B cell (primary cell): ENCODE measurements at regions of chr5 and their contacts with region 1.

Region 1: GRCh38 chr5:137743031-137743640 is 7.2 kb upstream of the KLHL3 start:
- DNase-seq: peak; percentile 73
- ATAC-seq: peak; percentile 71
- H3K4me3 ChIP-seq: no peak overlapping the region
- H3K4me3 Mint-ChIP-seq: no peak overlapping the region
- H3K27ac ChIP-seq: no peak overlapping the region
- H3K27ac Mint-ChIP-seq: no peak overlapping the region
- H3K4me1 ChIP-seq: no peaks in the 10 kb centered on the region
- H3K4me1 Mint-ChIP-seq: peaks cover 2% of the 10 kb centered on the region
- H3K27me3 ChIP-seq: no peaks in the 10 kb centered on the region
- H3K27me3 Mint-ChIP-seq: no peaks in the 10 kb centered on the region
- CTCF ChIP-seq: peak; percentile 81

Region 2: DNA sequence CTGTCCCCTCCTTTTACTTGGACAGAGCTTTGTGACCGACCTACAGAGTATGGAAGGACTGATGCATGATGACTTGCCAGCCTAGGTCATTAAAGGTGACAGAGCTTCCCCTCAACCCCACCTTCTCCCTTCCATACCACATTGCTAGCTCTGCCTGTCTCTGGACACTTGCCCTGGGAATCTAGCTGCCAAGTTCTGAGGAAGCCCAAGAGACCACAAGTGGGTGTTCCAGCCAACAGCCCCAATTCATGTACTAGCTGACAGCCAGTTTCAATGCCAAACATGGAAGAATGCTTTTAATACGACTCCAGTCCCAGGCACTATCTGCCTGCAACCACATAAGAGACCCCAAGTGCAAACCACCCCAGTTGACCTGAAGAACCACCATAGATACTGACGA is 721.1 kb before region 1 on chr5:
- CTCF ChIA-PET with region 1: no interaction called
- POLR2A ChIA-PET with region 1: no interaction called
- intact Hi-C with region 1: no loop called
- DNase-seq: no peak
- ATAC-seq: no peak
- H3K4me3 ChIP-seq: no peak overlapping the region
- H3K4me3 Mint-ChIP-seq: no peak overlapping the region
- H3K27ac ChIP-seq: no peak overlapping the region
- H3K27ac Mint-ChIP-seq: no peak overlapping the region
- H3K4me1 ChIP-seq: no peaks in the 10 kb centered on the region
- H3K4me1 Mint-ChIP-seq: peaks cover 2% of the 10 kb centered on the region
- H3K27me3 ChIP-seq: peaks cover 0 to 4% (median 0%) of the 10 kb centered on the region in 4 experiments
- H3K27me3 Mint-ChIP-seq: no peaks in the 10 kb centered on the region
- CTCF ChIP-seq: no peak

Region 3: DNA sequence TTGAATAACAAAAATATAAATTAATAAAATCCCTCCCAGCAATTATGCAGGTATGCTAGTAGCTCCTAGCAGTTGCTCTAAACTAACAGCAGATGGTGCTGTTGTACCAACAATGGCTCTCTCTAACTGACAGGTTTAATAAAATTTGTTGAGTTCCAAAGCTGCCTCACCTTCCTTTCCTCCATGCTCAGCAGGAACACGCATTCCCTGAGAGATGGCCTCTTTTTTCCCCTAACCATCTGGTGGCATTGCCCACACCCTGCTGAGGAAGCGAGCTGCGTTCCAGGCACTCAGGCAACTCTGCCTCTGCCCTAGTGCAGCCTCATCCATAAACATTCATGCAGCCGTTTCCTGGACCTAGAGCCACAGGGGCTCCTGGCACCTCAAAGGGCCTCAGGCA is 113.5 kb before region 1 on chr5:
- CTCF ChIA-PET with region 1: interaction called, 128 read pairs
- POLR2A ChIA-PET with region 1: no interaction called
- intact Hi-C with region 1: loop called (anchors 1 kb)
- DNase-seq: peak; percentile 58
- ATAC-seq: peak; percentile 51
- H3K4me3 ChIP-seq: no peak overlapping the region
- H3K4me3 Mint-ChIP-seq: no peak overlapping the region
- H3K27ac ChIP-seq: no peak overlapping the region
- H3K27ac Mint-ChIP-seq: no peak overlapping the region
- H3K4me1 ChIP-seq: no peaks in the 10 kb centered on the region
- H3K4me1 Mint-ChIP-seq: no peaks in the 10 kb centered on the region
- H3K27me3 ChIP-seq: no peaks in the 10 kb centered on the region
- H3K27me3 Mint-ChIP-seq: no peaks in the 10 kb centered on the region
- CTCF ChIP-seq: peak; percentile 95

Region 4: GRCh38 chr5:137730336-137730735 is 12.8 kb before region 1 on chr5:
- CTCF ChIA-PET with region 1: interaction called, 28 read pairs
- POLR2A ChIA-PET with region 1: no interaction called
- intact Hi-C with region 1: no loop called
- DNase-seq: no peak
- ATAC-seq: no peak
- H3K4me3 ChIP-seq: no peak overlapping the region
- H3K4me3 Mint-ChIP-seq: no peak overlapping the region
- H3K27ac ChIP-seq: no peak overlapping the region
- H3K27ac Mint-ChIP-seq: no peak overlapping the region
- H3K4me1 ChIP-seq: peaks cover 11 to 12% of the 10 kb centered on the region in 2 donors
- H3K4me1 Mint-ChIP-seq: no peaks in the 10 kb centered on the region
- H3K27me3 ChIP-seq: no peaks in the 10 kb centered on the region
- H3K27me3 Mint-ChIP-seq: peaks cover 3% of the 10 kb centered on the region
- CTCF ChIP-seq: no peak